Endothelial cell of umbilical vein (primary cell): ENCODE measurements at regions of chr7 and their contacts with region 1.

Region 1: GRCh38 chr7:98400542-98401340 is at the start of gene BAIAP2L1:
- DNase-seq: peak; percentile 60
- H3K4me3 ChIP-seq: peak within 1 kb of the TSS; percentile 32 to 36 (median 35)
- H3K27ac ChIP-seq: no peak within 1 kb of the TSS
- H3K4me1 ChIP-seq: no peaks in the 10 kb centered on the region
- H3K27me3 ChIP-seq: peaks cover 6 to 10% of the 10 kb centered on the region in 2 experiments
- CTCF ChIP-seq: peak in 1 of 2 donors; percentile 79
- POLR2A ChIP-seq: no peak
- total RNA-seq, gene BAIAP2L1: 1.1 and 1.2 TPM in 2 replicates

Region 2: GRCh38 chr7:98251841-98252639 is 148.7 kb before region 1 on chr7 and contains the start of gene TECPR1:
- CTCF ChIA-PET with region 1: interaction called, 4 read pairs
- POLR2A ChIA-PET with region 1: no interaction called
- dilution Hi-C with region 1: no loop called
- intact Hi-C with region 1: loop called (anchors 2 kb)
- DNase-seq: peak; percentile 89
- H3K4me3 ChIP-seq: peak within 1 kb of the TSS; percentile 53 to 96 (median 65)
- H3K27ac ChIP-seq: peak within 1 kb of the TSS; percentile 58
- H3K4me1 ChIP-seq: peaks cover 43% of the 10 kb centered on the region
- H3K27me3 ChIP-seq: no peaks in the 10 kb centered on the region
- CTCF ChIP-seq: no peak
- POLR2A ChIP-seq: peak; percentile 35
- total RNA-seq, gene TECPR1: 84.9 and 97.5 TPM in 2 replicates

Region 3: DNA sequence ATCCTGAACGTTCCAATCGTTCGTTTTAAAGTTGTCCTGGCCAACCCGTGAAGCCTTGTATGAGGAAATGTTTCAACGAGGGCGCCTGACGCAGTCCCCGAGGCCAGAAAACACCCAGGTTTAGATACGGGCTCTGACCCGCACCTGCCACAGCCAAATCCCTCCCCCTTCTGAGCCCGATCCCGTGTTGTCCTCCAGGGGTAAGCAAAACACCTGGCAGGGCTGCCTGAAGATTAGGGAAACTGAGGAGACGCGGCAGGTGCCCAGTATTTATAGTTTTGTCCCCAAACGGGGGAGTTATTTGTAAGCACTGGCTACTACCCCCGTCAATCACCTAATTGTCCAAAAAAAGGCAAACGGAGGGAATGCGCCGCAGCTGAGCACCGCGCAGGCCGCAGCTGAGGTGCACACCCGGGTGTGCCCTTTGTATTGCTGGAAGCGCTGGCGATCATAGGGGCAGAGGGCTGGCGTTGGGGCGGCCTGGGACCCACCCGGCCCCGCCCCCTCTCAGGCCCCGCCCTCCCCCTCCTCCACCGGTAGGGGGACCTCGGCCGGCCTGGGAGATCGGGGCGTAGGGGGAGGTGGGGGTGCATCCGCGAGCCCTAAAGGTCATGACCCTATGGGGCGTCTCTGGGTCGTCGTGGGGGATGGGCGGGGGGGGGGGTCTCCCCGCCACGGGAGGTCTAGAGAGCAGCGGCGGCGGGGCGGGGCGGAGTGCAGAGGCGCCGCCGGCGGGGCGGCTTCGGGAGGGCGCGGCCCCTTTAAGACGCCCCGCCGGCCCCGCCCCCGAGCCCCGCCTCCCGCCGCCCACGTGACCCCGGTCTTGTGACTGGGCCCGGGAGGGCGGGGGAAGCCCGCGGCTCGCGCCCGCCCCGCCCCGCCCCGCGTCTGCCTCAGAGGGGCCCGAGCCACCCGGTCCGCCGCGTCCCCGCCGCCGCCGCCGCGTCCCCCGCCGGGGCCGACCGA is 119.7 kb before region 1 on chr7 and contains the start of gene BRI3:
- CTCF ChIA-PET with region 1: interaction called, 4 read pairs
- POLR2A ChIA-PET with region 1: no interaction called
- dilution Hi-C with region 1: no loop called
- intact Hi-C with region 1: loop called (anchors 5 kb)
- DNase-seq: peak; percentile 79
- H3K4me3 ChIP-seq: peak within 1 kb of the TSS; percentile 20 to 95 (median 83)
- H3K27ac ChIP-seq: peak within 1 kb of the TSS; percentile 72
- H3K4me1 ChIP-seq: peaks cover 31% of the 10 kb centered on the region
- H3K27me3 ChIP-seq: no peaks in the 10 kb centered on the region
- CTCF ChIP-seq: peak in 1 of 2 donors; percentile 8
- POLR2A ChIP-seq: peak; percentile 74
- total RNA-seq, gene BRI3: 284 and 317 TPM in 2 replicates

Region 4: DNA sequence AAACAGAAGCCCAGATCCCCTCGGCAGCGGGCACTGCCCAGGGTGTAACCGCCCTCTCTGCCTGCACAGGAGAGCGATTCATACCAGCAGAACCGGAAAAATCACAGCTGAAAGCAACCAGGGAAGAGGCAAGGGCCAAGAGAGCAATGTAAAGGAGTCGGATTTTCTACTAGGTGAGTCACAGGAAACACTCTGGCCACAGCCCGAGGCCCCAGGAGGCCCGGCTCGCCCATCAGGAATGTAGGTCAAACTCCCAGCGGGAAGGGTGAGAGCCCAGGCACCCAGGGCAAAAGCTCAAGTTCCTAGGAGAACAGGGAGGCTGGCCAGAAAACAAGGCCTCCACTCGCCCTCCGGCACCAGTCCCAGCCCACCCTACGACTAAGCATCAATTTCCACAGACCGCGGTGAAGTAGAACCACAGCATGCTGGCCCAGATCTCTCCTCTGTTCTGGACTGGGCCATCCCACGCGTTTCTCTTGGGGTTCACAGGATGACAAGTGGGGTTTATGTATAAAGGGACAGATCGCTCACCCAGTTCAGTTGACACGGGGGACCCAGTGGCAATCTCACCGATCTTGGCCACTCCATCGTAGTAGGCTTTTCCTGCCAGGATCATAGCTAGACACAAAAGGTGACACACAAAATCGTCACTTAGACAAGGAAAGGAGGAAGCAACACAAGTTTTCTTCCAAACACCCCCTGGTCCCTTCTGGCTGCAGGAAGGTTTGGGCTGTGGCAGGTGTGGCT is 46.1 kb before region 1 on chr7:
- CTCF ChIA-PET with region 1: interaction called, 6 read pairs
- POLR2A ChIA-PET with region 1: no interaction called
- dilution Hi-C with region 1: no loop called
- intact Hi-C with region 1: loop called (anchors 1 kb)
- DNase-seq: peak; percentile 68
- H3K4me3 ChIP-seq: no peak overlapping the region
- H3K27ac ChIP-seq: peak overlapping the region; percentile 14
- H3K4me1 ChIP-seq: peaks cover 19% of the 10 kb centered on the region
- H3K27me3 ChIP-seq: no peaks in the 10 kb centered on the region
- CTCF ChIP-seq: no peak
- POLR2A ChIP-seq: no peak

Region 5: DNA sequence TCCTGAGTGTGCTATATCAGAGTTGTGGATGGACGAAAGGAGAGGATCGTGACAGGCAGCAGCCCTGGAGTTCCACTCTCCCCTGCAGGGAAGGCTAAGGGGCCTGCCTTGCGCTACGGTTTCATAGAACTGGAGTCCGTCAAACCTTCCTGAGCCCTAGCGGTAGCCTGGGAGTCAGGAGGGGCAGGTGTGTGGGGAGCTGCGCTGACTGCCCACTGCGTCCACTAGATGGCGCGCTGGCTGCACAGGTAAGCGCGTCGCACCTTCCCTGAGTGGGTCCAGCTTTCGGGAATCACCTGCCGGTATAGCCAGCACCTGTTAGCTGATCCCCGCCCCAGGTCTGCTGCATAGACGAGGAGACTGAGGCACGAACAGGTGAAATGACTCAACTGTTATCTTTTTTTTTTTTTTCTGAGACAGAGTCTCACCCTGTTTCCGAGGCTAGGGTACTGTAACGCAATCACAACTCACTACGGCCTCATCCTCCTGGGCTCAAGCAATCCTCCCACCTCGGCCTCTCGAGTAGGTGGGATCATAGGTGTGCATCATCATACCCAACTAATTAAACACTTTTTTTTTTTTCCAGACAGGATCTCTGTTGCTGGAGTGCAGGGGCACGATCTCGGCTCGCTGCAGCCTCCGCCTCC is 20.3 kb after region 1 on chr7:
- CTCF ChIA-PET with region 1: interaction called, 7 read pairs
- POLR2A ChIA-PET with region 1: interaction called, 3 read pairs
- dilution Hi-C with region 1: no loop called
- intact Hi-C with region 1: loop called (anchors 1 kb)
- DNase-seq: peak; percentile 36
- H3K4me3 ChIP-seq: no peak overlapping the region
- H3K27ac ChIP-seq: no peak overlapping the region
- H3K4me1 ChIP-seq: peaks cover 13% of the 10 kb centered on the region
- H3K27me3 ChIP-seq: no peaks in the 10 kb centered on the region
- CTCF ChIP-seq: peak; percentile 79 to 95
- POLR2A ChIP-seq: no peak